ENCODE measurements at regions of chr11 and their contacts with region 1.

Region 1: GRCh38 chr11:102293873-102294601 is 23.2 kb upstream of the BIRC3 start:
- DNase-seq: no peak
- ATAC-seq: peak; percentile 98
- H3K4me3 Mint-ChIP-seq: peak overlapping the region; percentile 88
- H3K27ac Mint-ChIP-seq: peak overlapping the region; percentile 97
- H3K4me1 Mint-ChIP-seq: peaks cover 34% of the 10 kb centered on the region
- H3K27me3 Mint-ChIP-seq: no peaks in the 10 kb centered on the region

Region 2: DNA sequence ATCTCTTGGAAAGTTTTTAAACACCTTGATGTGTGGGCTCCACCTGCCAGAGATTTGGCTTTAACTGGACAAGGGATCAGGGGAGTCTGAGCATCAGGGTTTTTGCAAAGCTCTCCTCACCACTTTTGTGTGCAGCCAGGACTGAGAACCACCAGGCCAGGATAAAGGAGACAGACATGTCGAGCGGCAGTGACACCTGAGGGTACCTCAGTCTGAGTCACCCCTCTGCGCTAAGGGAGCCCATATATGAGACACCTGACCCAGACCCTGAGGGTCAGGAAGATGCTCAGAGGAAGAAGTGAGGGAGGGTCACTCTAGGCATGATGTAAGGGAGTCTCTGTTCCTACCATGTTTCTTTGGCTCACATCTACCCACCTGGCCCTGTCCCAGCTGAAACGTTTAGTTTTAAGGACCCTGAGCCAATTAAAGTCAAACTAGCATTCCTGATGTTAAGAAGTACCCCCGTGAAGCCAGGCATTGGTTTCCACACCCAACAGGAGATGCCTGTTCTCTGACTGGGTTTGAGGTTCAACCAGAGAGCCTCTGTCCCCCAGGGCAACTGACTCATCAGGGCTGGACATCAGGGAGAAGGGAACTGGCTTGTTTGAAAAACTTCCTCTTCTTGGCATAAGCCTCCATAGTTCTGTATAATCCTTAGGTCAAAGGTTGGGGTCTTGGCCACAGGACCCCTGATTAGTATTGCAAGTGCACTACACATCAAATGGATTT is 49.2 kb before region 1 on chr11:
- CTCF ChIA-PET with region 1: no interaction called
- DNase-seq: no peak
- ATAC-seq: no peak
- H3K4me3 Mint-ChIP-seq: no peak overlapping the region
- H3K27ac Mint-ChIP-seq: no peak overlapping the region
- H3K4me1 Mint-ChIP-seq: no peaks in the 10 kb centered on the region
- H3K27me3 Mint-ChIP-seq: peaks cover 2% of the 10 kb centered on the region

Region 3: GRCh38 chr11:102256251-102256650 is 37.8 kb before region 1 on chr11:
- CTCF ChIA-PET with region 1: no interaction called
- DNase-seq: no peak
- ATAC-seq: no peak
- H3K4me3 Mint-ChIP-seq: no peak overlapping the region
- H3K27ac Mint-ChIP-seq: no peak overlapping the region
- H3K4me1 Mint-ChIP-seq: no peaks in the 10 kb centered on the region
- H3K27me3 Mint-ChIP-seq: no peaks in the 10 kb centered on the region

Region 4: GRCh38 chr11:102306048-102306585 is 12.1 kb after region 1 on chr11:
- CTCF ChIA-PET with region 1: interaction called, 75 read pairs
- DNase-seq: no peak
- ATAC-seq: peak; percentile 21
- H3K4me3 Mint-ChIP-seq: no peak overlapping the region
- H3K27ac Mint-ChIP-seq: peak overlapping the region; percentile 65
- H3K4me1 Mint-ChIP-seq: peaks cover 57% of the 10 kb centered on the region
- H3K27me3 Mint-ChIP-seq: no peaks in the 10 kb centered on the region

Region 5: DNA sequence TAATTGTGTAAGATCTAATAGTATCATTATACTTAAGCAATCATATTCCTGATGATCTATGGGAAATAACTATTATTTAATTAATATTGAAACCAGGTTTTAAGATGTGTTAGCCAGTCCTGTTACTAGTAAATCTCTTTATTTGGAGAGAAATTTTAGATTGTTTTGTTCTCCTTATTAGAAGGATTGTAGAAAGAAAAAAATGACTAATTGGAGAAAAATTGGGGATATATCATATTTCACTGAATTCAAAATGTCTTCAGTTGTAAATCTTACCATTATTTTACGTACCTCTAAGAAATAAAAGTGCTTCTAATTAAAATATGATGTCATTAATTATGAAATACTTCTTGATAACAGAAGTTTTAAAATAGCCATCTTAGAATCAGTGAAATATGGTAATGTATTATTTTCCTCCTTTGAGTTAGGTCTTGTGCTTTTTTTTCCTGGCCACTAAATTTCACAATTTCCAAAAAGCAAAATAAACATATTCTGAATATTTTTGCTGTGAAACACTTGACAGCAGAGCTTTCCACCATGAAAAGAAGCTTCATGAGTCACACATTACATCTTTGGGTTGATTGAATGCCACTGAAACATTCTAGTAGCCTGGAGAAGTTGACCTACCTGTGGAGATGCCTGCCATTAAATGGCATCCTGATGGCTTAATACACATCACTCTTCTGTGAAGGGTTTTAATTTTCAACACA is 29.7 kb after region 1 on chr11:
- CTCF ChIA-PET with region 1: interaction called, 65 read pairs
- DNase-seq: no peak
- ATAC-seq: no peak
- H3K4me3 Mint-ChIP-seq: no peak overlapping the region
- H3K27ac Mint-ChIP-seq: peak overlapping the region; percentile 59
- H3K4me1 Mint-ChIP-seq: peaks cover 58% of the 10 kb centered on the region
- H3K27me3 Mint-ChIP-seq: no peaks in the 10 kb centered on the region

Region 6: GRCh38 chr11:102451681-102452460 is 157.8 kb after region 1 on chr11:
- CTCF ChIA-PET with region 1: interaction called, 11 read pairs
- DNase-seq: peak; percentile 90
- ATAC-seq: peak; percentile 67
- H3K4me3 Mint-ChIP-seq: peak overlapping the region; percentile 87
- H3K27ac Mint-ChIP-seq: peak overlapping the region; percentile 98
- H3K4me1 Mint-ChIP-seq: peaks cover 64% of the 10 kb centered on the region
- H3K27me3 Mint-ChIP-seq: no peaks in the 10 kb centered on the region

Region 7: GRCh38 chr11:102614485-102614884 is 320.4 kb after region 1 on chr11:
- CTCF ChIA-PET with region 1: interaction called, 27 read pairs
- DNase-seq: no peak
- ATAC-seq: no peak
- H3K4me3 Mint-ChIP-seq: no peak overlapping the region
- H3K27ac Mint-ChIP-seq: no peak overlapping the region
- H3K4me1 Mint-ChIP-seq: peaks cover 11% of the 10 kb centered on the region
- H3K27me3 Mint-ChIP-seq: no peaks in the 10 kb centered on the region

Measured in activated CD8-positive, alpha-beta memory T cell treated with anti-CD3 and anti-CD28 coated beads, Interleukin-2, amount 10 ng/mL, durations not matched to agents 7 days and 5 days (primary cell).